T-cell (primary cell): ENCODE measurements at regions of chr3 and their contacts with region 1.

Region 1: GRCh38 chr3:142595951-142596725 is at the start of gene PLS1:
- DNase-seq: peak; percentile 56 to 90 (median 75)
- ATAC-seq: peak; percentile 87 to 89 (median 88)
- H3K4me3 ChIP-seq: peak within 1 kb of the TSS; percentile 74 to 89
- H3K4me3 Mint-ChIP-seq: peak within 1 kb of the TSS; percentile 95 to 98 (median 96)
- H3K27ac ChIP-seq: peak within 1 kb of the TSS; percentile 28
- H3K27ac Mint-ChIP-seq: peak within 1 kb of the TSS; percentile 84 to 92
- H3K4me1 ChIP-seq: peaks cover 3 to 7% of the 10 kb centered on the region in 2 experiments
- H3K4me1 Mint-ChIP-seq: peaks cover 17 to 21% (median 18%) of the 10 kb centered on the region in 3 donors
- H3K27me3 ChIP-seq: peaks cover 0 to 3% of the 10 kb centered on the region in 2 experiments
- H3K27me3 Mint-ChIP-seq: peaks cover 0 to 2% of the 10 kb centered on the region in 2 donors
- total RNA-seq, gene PLS1: 0.84 to 3.6 (median 1.8) TPM

Region 2: GRCh38 chr3:142670120-142670519 is 74.0 kb after region 1 on chr3:
- CTCF ChIA-PET with region 1: no interaction called
- POLR2A ChIA-PET with region 1: interaction called in 1 of 2 experiments, 10 read pairs
- DNase-seq: no peak
- ATAC-seq: no peak
- H3K4me3 ChIP-seq: no peak overlapping the region
- H3K4me3 Mint-ChIP-seq: no peak overlapping the region
- H3K27ac ChIP-seq: no peak overlapping the region
- H3K27ac Mint-ChIP-seq: no peak overlapping the region
- H3K4me1 ChIP-seq: no peaks in the 10 kb centered on the region
- H3K4me1 Mint-ChIP-seq: no peaks in the 10 kb centered on the region
- H3K27me3 ChIP-seq: peaks cover 0 to 2% of the 10 kb centered on the region in 2 experiments
- H3K27me3 Mint-ChIP-seq: no peaks in the 10 kb centered on the region

Region 3: GRCh38 chr3:142694225-142694624 is 98.1 kb after region 1 on chr3:
- CTCF ChIA-PET with region 1: no interaction called
- POLR2A ChIA-PET with region 1: no interaction called
- DNase-seq: no peak
- ATAC-seq: no peak
- H3K4me3 ChIP-seq: no peak overlapping the region
- H3K4me3 Mint-ChIP-seq: no peak overlapping the region
- H3K27ac ChIP-seq: no peak overlapping the region
- H3K27ac Mint-ChIP-seq: no peak overlapping the region
- H3K4me1 ChIP-seq: no peaks in the 10 kb centered on the region
- H3K4me1 Mint-ChIP-seq: no peaks in the 10 kb centered on the region
- H3K27me3 ChIP-seq: no peaks in the 10 kb centered on the region
- H3K27me3 Mint-ChIP-seq: no peaks in the 10 kb centered on the region

Region 4: GRCh38 chr3:143314251-143315093 is 718.3 kb after region 1 on chr3:
- CTCF ChIA-PET with region 1: no interaction called
- POLR2A ChIA-PET with region 1: no interaction called
- DNase-seq: no peak
- ATAC-seq: no peak
- H3K4me3 ChIP-seq: no peak overlapping the region
- H3K4me3 Mint-ChIP-seq: no peak overlapping the region
- H3K27ac ChIP-seq: no peak overlapping the region
- H3K27ac Mint-ChIP-seq: no peak overlapping the region
- H3K4me1 ChIP-seq: no peaks in the 10 kb centered on the region
- H3K4me1 Mint-ChIP-seq: no peaks in the 10 kb centered on the region
- H3K27me3 ChIP-seq: no peaks in the 10 kb centered on the region
- H3K27me3 Mint-ChIP-seq: no peaks in the 10 kb centered on the region